ENCODE measurements at regions of chr3 and their contacts with region 1.

Region 1: DNA sequence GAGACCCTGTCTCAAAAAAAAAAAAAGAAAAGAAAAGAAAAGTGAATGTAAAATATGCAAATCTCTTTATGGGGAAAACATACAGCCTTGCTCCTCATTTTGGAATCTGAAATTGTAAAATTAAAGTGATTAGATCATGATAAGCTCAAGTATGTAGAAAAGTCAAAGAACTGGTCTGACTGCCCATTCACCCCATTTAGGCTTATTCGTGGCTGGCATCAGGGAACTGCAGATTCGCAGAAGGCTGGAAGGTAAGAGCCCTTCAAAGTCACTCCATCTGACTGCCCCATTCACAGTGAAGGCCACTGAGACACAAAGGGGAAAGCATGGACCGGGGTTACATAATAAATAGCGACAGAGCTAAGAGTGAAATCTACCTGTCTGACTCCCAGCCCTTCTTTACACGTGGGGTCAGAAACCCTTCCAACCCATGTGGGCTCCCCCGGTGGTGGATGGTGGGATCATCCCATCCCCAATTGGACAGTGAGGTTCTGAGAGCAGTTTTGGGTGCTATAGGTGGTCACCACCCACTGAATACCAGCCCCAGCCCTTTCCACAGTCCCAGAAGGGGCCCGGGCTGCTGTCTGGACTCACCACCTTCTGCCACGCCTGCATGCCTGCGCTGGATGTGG is 18.1 kb downstream of the DZIP1L start:
- DNase-seq: peak in 1 of 2 experiments; percentile 86
- H3K4me3 ChIP-seq: no peak overlapping the region
- H3K27ac ChIP-seq: no peak overlapping the region
- H3K4me1 ChIP-seq: peaks cover 0 to 6% (median 1%) of the 10 kb centered on the region in 4 experiments; a peak in 4 of 7 replicates
- H3K27me3 ChIP-seq: no peaks in the 10 kb centered on the region
- CTCF ChIP-seq: peak; percentile 45 to 79 (median 72)
- EP300 ChIP-seq: no peak
- POLR2A ChIP-seq: no peak
- RAD21 ChIP-seq: peak in 1 of 2 experiments; percentile 24; a peak in 1 of 4 replicates

Region 2: DNA sequence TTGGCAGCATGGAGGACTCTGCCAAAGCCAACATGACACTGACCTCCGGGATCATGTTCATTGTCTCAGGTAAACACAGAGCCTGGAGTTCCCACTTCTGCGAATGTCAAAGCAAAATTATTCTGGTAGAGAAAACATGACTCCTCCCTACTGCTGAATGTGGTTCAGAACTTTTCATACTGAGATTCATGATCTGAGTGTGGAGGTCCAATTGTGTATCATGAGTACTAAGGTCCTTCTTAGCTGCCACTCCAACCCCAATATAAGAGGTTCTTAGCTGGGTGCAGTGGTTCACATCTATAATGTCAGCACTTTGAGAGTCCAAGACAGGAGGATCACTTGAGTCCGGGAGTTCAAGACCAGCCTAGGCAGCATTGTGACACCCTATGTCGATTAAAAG is 73.5 kb before region 1 on chr3:
- CTCF ChIA-PET with region 1: no interaction called
- POLR2A ChIA-PET with region 1: no interaction called
- DNase-seq: no peak
- H3K4me3 ChIP-seq: no peak overlapping the region
- H3K27ac ChIP-seq: no peak overlapping the region
- H3K4me1 ChIP-seq: no peaks in the 10 kb centered on the region
- H3K27me3 ChIP-seq: no peaks in the 10 kb centered on the region
- CTCF ChIP-seq: no peak
- EP300 ChIP-seq: no peak
- POLR2A ChIP-seq: no peak
- RAD21 ChIP-seq: no peak

Region 3: DNA sequence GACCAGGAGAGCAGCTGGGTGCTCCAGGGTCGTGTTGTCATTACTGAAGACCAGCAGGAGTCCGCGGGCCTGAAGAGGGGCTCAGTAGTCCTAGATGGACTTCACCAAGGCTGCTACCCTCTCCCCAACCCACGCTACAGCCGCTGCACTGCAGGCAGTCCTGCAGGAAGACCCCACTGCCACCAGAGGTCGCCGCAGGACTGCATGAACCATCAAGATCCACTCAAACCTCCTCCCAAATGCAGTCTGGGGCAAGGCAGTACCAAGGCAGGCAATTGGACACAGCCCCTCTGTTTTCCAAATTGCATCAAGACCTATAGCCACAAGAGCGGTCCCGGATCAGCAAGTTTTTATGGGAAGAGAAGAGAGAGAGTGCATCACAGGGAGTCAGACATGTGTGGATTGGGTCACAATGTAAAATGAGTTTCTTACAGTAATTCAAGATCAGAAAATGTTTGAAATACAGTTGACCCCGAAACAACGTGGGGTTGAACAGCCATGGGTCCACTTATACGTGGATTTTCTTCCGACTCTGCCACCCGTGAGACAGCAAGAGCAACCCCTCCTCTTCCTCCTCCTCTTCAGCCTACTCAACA is 28.6 kb before region 1 on chr3:
- CTCF ChIA-PET with region 1: interaction called, 19 read pairs
- POLR2A ChIA-PET with region 1: no interaction called
- DNase-seq: peak; percentile 64 to 89
- H3K4me3 ChIP-seq: no peak overlapping the region
- H3K27ac ChIP-seq: no peak overlapping the region
- H3K4me1 ChIP-seq: peaks cover 1 to 5% (median 3%) of the 10 kb centered on the region in 4 experiments; a peak in 3 of 7 replicates
- H3K27me3 ChIP-seq: no peaks in the 10 kb centered on the region
- CTCF ChIP-seq: peak; percentile 97 to 100 (median 99)
- EP300 ChIP-seq: no peak
- POLR2A ChIP-seq: no peak
- RAD21 ChIP-seq: peak; percentile 99 to 100

Region 4: GRCh38 chr3:138082085-138082991 is 14.9 kb before region 1 on chr3:
- CTCF ChIA-PET with region 1: interaction called, 15 read pairs
- POLR2A ChIA-PET with region 1: interaction called, 4 read pairs
- DNase-seq: no peak
- H3K4me3 ChIP-seq: no peak overlapping the region
- H3K27ac ChIP-seq: no peak overlapping the region
- H3K4me1 ChIP-seq: no peaks in the 10 kb centered on the region
- H3K27me3 ChIP-seq: no peaks in the 10 kb centered on the region
- CTCF ChIP-seq: no peak
- EP300 ChIP-seq: no peak
- POLR2A ChIP-seq: no peak
- RAD21 ChIP-seq: no peak

Region 5: DNA sequence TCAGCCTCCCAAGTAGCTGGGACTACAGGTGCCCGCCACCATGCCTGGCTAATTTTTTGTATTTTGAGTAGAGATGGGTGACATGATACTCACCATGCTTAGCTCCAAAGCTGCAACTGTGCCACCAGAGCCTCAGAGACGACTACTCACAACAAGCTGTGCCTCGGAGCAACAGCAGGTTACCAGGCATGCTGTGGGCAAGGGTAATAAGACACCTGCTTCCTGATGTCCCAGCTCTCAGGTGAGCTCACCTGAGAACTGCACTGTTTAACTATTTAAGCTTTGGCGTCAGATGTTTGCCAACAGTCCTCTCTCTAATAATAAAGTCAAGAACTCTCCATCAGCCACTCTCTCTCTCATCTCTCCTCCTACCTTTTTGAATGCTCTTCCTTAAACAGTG is 10.8 kb after region 1 on chr3:
- CTCF ChIA-PET with region 1: interaction called, 27 read pairs
- POLR2A ChIA-PET with region 1: interaction called, 5 read pairs
- DNase-seq: no peak
- H3K4me3 ChIP-seq: no peak overlapping the region
- H3K27ac ChIP-seq: no peak overlapping the region
- H3K4me1 ChIP-seq: peaks cover 0 to 7% (median 0%) of the 10 kb centered on the region in 4 experiments; a peak in 1 of 7 replicates
- H3K27me3 ChIP-seq: no peaks in the 10 kb centered on the region
- CTCF ChIP-seq: no peak
- EP300 ChIP-seq: no peak
- POLR2A ChIP-seq: no peak
- RAD21 ChIP-seq: no peak

Measured in H1 (cell line).